ENCODE measurements at regions of chr20 and their contacts with region 1.

Region 1: DNA sequence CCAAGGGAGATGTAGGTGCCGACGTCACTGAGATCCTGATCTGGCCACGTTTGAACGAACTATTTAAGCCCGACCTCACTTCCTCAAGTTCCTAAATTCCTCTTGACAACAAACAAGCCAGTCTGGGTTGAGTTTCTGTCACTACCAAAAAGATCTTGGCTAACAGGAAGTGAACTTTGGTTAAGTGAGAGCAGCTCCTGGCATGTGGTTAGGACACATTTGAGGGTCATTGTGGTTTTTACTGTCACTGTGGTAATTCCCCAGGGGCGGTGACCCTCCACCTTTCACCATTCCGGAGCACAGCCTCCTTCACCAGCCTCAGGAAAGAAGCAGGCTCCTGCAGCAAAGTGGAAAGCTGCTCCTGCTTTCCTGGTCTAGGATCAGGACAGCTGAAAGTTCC is 43.1 kb upstream of the ZNF831 start:
- DNase-seq: no peak
- H3K4me3 ChIP-seq: no peak overlapping the region
- H3K27ac ChIP-seq: no peak overlapping the region
- H3K4me1 ChIP-seq: no peaks in the 10 kb centered on the region
- H3K27me3 ChIP-seq: no peaks in the 10 kb centered on the region
- CTCF ChIP-seq: no peak

Region 2: DNA sequence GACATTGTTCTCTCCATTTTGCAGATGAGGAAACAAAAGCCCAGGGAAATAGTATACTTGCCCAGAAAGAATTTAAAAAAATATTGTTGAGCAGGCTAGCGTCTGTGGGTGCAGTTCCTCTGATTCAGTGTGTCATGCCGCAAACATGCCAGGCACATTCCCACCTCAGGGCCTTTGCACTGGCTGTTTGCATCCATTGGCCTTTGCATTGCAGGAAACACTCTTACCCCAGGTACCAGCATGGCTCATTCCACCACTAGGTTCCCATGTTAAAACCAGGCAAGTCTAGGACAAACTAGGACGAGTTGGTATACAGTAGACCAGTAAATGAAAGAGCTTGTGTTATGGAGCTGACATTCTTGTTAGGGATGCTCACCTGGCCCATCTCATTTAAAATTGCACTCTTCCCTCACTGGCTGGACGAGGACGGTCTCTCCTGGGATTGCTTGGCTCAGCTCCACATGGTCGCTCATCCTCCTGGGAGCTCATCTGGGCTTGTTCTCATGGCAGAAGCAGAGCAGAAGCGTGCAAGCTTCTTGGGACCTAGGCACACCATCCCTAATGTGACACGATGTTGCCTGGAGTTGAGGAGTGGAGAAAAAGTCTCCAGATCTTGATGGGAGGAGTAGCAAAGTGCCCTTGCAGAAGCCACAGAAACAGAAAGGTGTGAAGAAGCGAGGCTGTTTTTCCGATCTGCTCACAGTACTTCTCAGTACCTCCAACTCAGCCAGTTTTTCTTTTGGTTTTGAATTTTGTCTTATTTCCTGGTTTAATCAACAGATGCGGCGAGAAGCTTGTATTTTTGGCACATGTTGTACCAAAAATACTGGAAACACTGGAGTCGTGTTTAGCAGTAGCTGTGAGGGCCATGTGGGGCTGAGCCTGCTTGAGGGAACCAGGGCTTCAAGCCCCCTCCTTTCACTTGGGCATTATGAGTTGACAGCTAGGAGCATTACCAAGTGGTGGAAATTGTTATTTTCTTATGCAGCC is 57.1 kb after region 1 on chr20:
- CTCF ChIA-PET with region 1: no interaction called
- dilution Hi-C with region 1: loop called (anchors 5 kb)
- in situ Hi-C with region 1: no loop called
- intact Hi-C with region 1: no loop called
- DNase-seq: no peak
- H3K4me3 ChIP-seq: no peak overlapping the region
- H3K27ac ChIP-seq: no peak overlapping the region
- H3K4me1 ChIP-seq: no peaks in the 10 kb centered on the region
- H3K27me3 ChIP-seq: peaks cover 5% of the 10 kb centered on the region
- CTCF ChIP-seq: no peak